Aorta (tissue), 5 donors: ENCODE measurements at regions of chr18 and their contacts with region 1.

Region 1: DNA sequence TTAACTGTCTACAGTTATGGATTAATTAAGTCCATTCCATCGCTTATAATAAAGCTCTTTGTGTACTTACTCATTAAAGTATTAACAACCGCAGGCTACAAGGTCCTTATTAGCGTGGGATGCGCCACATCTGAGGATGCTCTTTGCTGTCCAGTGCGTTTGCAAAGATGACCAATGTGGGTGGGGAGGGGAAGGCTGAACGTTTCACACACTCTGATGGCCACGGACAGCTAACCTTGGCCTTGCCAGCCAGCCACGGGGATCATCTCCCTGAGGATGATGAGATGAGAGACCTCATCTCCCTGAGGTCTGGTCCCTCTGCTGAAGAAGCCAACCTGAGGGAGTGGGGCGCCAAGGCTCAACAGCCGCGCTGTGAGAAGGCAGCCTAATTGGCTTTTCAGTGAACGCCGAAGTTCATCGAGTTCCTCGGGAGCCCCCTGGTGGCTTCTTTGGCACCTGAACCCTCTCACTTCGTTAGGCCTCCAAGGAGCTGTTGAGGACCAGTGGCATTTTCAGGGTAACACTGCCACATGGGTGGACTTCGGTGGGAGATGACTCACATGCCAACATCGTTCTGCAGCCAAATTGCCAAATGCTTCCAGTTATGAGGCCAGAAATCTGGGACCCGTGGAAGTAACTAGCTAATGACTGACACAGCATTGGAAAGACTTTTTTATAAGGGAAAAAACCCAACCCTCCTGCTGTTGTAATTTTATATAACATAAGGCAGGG is 69.3 kb upstream of the SEC11C start:
- DNase-seq: peak; percentile 91 to 96
- ATAC-seq: peak; percentile 82
- H3K4me3 ChIP-seq: no peak overlapping the region
- H3K27ac ChIP-seq: no peak overlapping the region
- H3K4me1 ChIP-seq: no peaks in the 10 kb centered on the region
- H3K27me3 ChIP-seq: no peaks in the 10 kb centered on the region

Region 2: GRCh38 chr18:58768293-58768974 is 301.9 kb before region 1 on chr18:
- intact Hi-C with region 1: loop called in 1 of 2 experiments (anchors 1 kb)
- DNase-seq: peak; percentile 80 to 94
- ATAC-seq: peak; percentile 94
- H3K4me3 ChIP-seq: no peak overlapping the region
- H3K27ac ChIP-seq: no peak overlapping the region
- H3K4me1 ChIP-seq: no peaks in the 10 kb centered on the region
- H3K27me3 ChIP-seq: no peaks in the 10 kb centered on the region